CD4-positive, alpha-beta memory T cell (primary cell): ENCODE measurements at regions of chr17 and their contacts with region 1.

Region 1: DNA sequence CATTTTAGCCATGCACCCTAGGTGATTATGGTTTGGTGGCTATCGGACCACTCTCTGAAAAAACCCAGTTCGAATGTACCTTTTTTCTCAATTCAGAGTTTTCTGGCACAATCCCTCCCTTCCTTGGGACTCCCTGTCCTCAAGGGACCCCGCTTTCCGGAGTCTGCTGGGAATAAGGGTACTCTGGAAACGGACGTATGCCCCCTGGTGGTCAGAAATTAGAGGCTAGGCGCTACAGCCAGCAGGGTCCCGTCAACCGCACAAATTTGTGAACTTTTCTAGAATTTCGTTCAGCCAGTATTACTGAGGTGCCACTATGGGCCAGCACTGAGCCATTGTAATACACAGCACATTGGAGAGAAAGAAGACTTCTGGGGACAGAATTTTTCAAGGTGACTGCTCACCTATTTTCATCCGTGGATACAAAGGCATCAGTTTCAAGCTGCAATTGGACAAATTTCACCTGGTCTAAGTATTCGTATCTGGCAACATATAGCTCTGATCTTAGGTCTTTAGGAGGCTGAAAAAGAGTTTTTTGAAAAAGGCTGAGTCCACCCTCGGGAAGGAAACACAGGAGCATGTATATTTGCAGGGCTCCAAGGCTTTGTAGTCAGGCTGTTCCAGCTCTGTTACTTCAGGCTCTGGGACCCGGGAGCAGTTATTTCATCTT is 27.1 kb upstream of the CRYBA1 start:
- DNase-seq: peak; percentile 60 to 67 (median 64)
- H3K4me3 ChIP-seq: no peak overlapping the region
- H3K4me3 Mint-ChIP-seq: no peak overlapping the region
- H3K27ac ChIP-seq: no peak overlapping the region
- H3K27ac Mint-ChIP-seq: peak overlapping the region in 1 of 7 donors; percentile 8
- H3K4me1 ChIP-seq: no peaks in the 10 kb centered on the region
- H3K4me1 Mint-ChIP-seq: peaks cover 4 to 9% (median 7%) of the 10 kb centered on the region in 4 donors
- H3K27me3 ChIP-seq: no peaks in the 10 kb centered on the region
- H3K27me3 Mint-ChIP-seq: peaks cover 0 to 2% of the 10 kb centered on the region in 2 donors

Region 2: GRCh38 chr17:29124117-29124924 is 95.2 kb before region 1 on chr17:
- CTCF ChIA-PET with region 1: interaction called, 44 read pairs
- POLR2A ChIA-PET with region 1: no interaction called
- intact Hi-C with region 1: no loop called
- DNase-seq: peak; percentile 37 to 60 (median 42)
- H3K4me3 ChIP-seq: no peak overlapping the region
- H3K4me3 Mint-ChIP-seq: no peak overlapping the region
- H3K27ac ChIP-seq: no peak overlapping the region
- H3K27ac Mint-ChIP-seq: no peak overlapping the region
- H3K4me1 ChIP-seq: peaks cover 7% of the 10 kb centered on the region
- H3K4me1 Mint-ChIP-seq: peaks cover 6 to 12% (median 7%) of the 10 kb centered on the region in 4 donors
- H3K27me3 ChIP-seq: no peaks in the 10 kb centered on the region
- H3K27me3 Mint-ChIP-seq: no peaks in the 10 kb centered on the region

Region 3: GRCh38 chr17:29140051-29140621 is 79.4 kb before region 1 on chr17:
- CTCF ChIA-PET with region 1: interaction called, 277 read pairs
- POLR2A ChIA-PET with region 1: interaction called, 4 read pairs
- intact Hi-C with region 1: no loop called
- DNase-seq: peak; percentile 65 to 92 (median 69)
- H3K4me3 ChIP-seq: peak overlapping the region; percentile 55 to 72
- H3K4me3 Mint-ChIP-seq: peak overlapping the region; percentile 90 to 98 (median 92)
- H3K27ac ChIP-seq: peak overlapping the region; percentile 81
- H3K27ac Mint-ChIP-seq: peak overlapping the region; percentile 91 to 99 (median 97)
- H3K4me1 ChIP-seq: peaks cover 69% of the 10 kb centered on the region
- H3K4me1 Mint-ChIP-seq: peaks cover 49 to 82% (median 63%) of the 10 kb centered on the region in 4 donors
- H3K27me3 ChIP-seq: no peaks in the 10 kb centered on the region
- H3K27me3 Mint-ChIP-seq: no peaks in the 10 kb centered on the region

Region 4: GRCh38 chr17:29233301-29233700 is 13.8 kb after region 1 on chr17:
- CTCF ChIA-PET with region 1: interaction called, 11 read pairs
- POLR2A ChIA-PET with region 1: no interaction called
- intact Hi-C with region 1: no loop called
- DNase-seq: no peak
- H3K4me3 ChIP-seq: no peak overlapping the region
- H3K4me3 Mint-ChIP-seq: no peak overlapping the region
- H3K27ac ChIP-seq: no peak overlapping the region
- H3K27ac Mint-ChIP-seq: no peak overlapping the region
- H3K4me1 ChIP-seq: no peaks in the 10 kb centered on the region
- H3K4me1 Mint-ChIP-seq: no peaks in the 10 kb centered on the region
- H3K27me3 ChIP-seq: no peaks in the 10 kb centered on the region
- H3K27me3 Mint-ChIP-seq: no peaks in the 10 kb centered on the region